ENCODE measurements at regions of chr12 and their contacts with region 1.

Region 1: DNA sequence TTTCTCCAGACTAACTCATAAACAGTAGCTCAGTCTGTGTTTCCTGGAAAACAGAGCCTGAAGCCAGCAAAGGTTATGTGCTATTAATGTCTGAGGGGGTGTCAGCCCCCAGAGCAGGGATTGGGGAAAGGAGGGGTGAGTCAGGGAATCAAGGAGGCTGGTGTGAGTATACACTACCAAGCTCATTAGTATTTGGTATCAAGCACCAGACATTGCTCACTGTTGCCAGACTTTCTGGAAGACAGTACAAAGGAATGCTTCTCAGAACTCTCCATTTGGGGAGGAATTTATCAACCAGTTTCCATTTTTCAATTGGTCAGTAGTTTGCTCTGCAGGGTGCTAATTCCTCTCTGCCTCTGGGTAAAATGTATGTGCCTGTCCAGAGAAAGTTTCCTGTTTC is 443.4 kb downstream of the GLT1D1 start:
- DNase-seq: no peak
- ATAC-seq: no peak
- H3K4me3 ChIP-seq: no peak overlapping the region
- H3K27ac ChIP-seq: no peak overlapping the region
- H3K4me1 ChIP-seq: no peaks in the 10 kb centered on the region
- H3K27me3 ChIP-seq: no peaks in the 10 kb centered on the region
- CTCF ChIP-seq: no peak

Region 2: GRCh38 chr12:129215436-129216025 is 81.1 kb before region 1 on chr12:
- intact Hi-C with region 1: loop called in 1 of 2 experiments (anchors 2 kb)
- DNase-seq: no peak
- ATAC-seq: no peak
- H3K4me3 ChIP-seq: no peak overlapping the region
- H3K27ac ChIP-seq: no peak overlapping the region
- H3K4me1 ChIP-seq: no peaks in the 10 kb centered on the region
- H3K27me3 ChIP-seq: no peaks in the 10 kb centered on the region
- CTCF ChIP-seq: no peak

Region 3: DNA sequence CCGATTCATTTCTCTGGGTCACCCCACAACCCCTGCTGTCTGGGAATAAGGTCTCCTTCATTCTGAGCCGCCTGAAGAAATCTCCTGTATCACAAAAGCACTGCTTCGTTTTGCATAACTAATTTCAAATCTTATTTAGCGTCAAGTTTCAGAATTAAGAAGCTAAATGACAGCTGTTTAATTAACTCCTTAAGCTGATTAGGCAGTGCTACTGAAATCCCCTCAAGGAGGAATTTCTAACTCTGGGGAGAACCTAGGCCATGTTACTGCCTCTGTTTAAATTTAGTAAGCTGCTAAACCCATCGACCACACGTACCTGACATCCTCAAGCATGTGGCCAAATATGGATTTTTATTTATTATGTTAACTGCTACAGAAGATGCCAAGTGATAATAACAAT is 69.8 kb before region 1 on chr12:
- intact Hi-C with region 1: no loop called
- DNase-seq: no peak
- ATAC-seq: no peak
- H3K4me3 ChIP-seq: no peak overlapping the region
- H3K27ac ChIP-seq: no peak overlapping the region
- H3K4me1 ChIP-seq: no peaks in the 10 kb centered on the region
- H3K27me3 ChIP-seq: no peaks in the 10 kb centered on the region
- CTCF ChIP-seq: no peak

Region 4: DNA sequence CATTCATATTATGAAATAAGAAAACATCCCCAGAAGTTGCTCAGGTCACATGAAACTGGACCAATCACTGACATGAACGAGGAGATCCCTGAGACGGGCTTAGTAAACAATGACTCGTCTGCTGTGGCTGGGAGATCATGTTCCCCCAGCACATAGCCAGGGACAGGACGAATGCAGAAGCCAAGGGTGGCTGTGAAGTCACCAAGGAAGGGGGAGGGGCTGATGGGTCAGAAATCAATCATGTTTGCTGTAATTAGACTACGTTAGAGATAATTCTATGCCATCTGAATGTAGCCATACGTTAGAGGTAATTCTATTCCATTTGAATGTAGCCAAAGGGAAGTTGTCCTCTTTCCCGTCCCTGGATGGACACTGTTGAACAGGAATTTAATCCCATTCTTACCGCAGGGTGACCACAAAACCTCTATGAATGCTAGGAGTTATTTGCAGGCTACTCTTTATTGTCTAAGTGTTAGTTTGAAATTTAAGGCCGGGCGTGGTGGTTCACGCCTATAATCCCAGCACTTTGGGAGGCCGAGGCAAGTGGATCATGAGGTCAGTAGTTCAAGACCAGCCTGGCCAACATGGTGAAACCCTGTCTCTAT is 274.2 kb after region 1 on chr12:
- intact Hi-C with region 1: no loop called
- DNase-seq: no peak
- ATAC-seq: no peak
- H3K4me3 ChIP-seq: no peak overlapping the region
- H3K27ac ChIP-seq: no peak overlapping the region
- H3K4me1 ChIP-seq: no peaks in the 10 kb centered on the region
- H3K27me3 ChIP-seq: no peaks in the 10 kb centered on the region
- CTCF ChIP-seq: no peak